ENCODE measurements at regions of chr2 and their contacts with region 1.

Region 1: DNA sequence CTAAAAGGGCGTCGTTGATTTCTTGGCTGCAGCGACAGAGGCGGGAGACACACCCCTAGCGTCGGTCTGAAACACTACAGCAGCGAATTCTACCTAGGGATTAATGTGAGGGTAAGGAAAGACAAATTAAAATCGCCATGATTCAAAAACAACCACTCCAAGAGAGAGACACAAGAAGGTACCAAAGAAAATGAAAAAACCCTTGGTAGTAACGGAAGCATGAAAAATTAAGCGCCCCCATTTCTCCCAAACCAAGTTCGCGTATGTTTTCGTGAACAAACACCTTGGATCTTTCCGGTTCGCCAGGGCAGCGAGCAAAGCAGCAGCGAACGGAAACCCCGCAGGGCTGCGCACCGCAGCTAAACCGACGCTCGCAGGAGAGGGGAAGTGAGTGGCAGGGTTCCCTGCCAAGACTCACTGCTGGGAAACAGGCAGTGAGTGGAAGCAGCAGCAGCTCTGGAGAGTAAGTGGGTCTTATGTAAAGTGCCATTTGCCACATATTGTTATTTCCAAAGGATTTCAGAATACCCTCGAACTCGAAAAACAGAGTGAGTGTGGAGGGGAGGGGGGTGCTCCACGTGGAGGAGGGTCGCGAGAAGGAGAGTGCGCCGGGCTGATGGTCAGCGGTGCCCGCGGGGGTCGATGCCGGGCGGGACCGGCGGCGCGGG is 1.0 kb downstream of the PPP3R1 start:
- DNase-seq: peak; percentile 83
- H3K4me3 Mint-ChIP-seq: peak overlapping the region; percentile 89
- H3K27ac Mint-ChIP-seq: peak overlapping the region; percentile 98
- H3K4me1 Mint-ChIP-seq: peaks cover 39% of the 10 kb centered on the region
- H3K27me3 Mint-ChIP-seq: no peaks in the 10 kb centered on the region

Region 2: DNA sequence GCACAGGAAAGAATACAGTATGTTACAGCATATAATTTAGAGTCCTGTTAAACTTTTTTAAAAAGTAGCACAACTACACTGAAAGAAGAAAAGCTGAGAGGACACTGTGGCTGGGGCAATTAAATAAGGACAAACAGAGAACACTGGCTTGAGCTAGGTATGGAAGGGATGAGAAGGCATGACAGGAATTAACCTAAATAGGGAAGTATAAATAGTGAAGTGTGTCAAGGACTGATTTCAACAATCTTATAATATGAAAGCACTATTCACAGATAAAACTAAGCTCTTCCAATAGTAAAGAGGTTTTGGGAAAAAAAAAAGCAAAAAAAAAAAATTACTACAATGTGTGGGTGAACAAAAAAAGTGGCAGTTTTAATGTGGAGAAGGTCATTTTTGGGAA is 44.5 kb before region 1 on chr2:
- CTCF ChIA-PET with region 1: interaction called, 3 read pairs
- POLR2A ChIA-PET with region 1: interaction called, 13 read pairs
- DNase-seq: no peak
- H3K4me3 Mint-ChIP-seq: no peak overlapping the region
- H3K27ac Mint-ChIP-seq: no peak overlapping the region
- H3K4me1 Mint-ChIP-seq: peaks cover 52% of the 10 kb centered on the region
- H3K27me3 Mint-ChIP-seq: no peaks in the 10 kb centered on the region

Region 3: DNA sequence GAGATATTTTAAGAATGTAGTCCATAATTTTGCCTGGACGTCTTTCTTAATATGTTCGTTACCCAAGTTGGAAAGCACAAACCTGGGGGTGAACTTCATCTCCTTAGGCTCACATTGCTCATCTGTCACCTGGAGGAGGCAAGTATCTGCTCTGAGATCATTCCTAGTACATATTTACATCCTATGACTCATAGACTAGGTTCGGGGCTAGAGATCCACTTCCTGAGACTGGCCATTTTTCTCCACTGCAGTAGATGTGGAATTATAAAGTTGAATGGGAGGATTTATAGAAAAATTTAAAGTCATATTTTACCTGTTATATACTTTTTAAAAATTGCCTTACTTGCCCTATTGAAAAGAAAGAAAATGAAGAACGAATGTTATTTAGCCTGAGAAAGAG is 314.5 kb after region 1 on chr2:
- CTCF ChIA-PET with region 1: no interaction called
- POLR2A ChIA-PET with region 1: no interaction called
- DNase-seq: no peak
- H3K4me3 Mint-ChIP-seq: no peak overlapping the region
- H3K27ac Mint-ChIP-seq: no peak overlapping the region
- H3K4me1 Mint-ChIP-seq: no peaks in the 10 kb centered on the region
- H3K27me3 Mint-ChIP-seq: no peaks in the 10 kb centered on the region

Measured in activated CD4-positive, alpha-beta memory T cell treated with anti-CD3 and anti-CD28 coated beads, Interleukin-2, amount 10 ng/mL, durations not matched to agents 7 days and 5 days (primary cell).